Activated CD4-positive, alpha-beta memory T cell treated with anti-CD3 and anti-CD28 coated beads for 36 hours (primary cell): ENCODE measurements at regions of chr19 and their contacts with region 1.

Region 1: GRCh38 chr19:54203151-54203611 is 2.5 kb downstream of the RPS9 start:
- DNase-seq: no peak
- H3K4me3 Mint-ChIP-seq: peak overlapping the region; percentile 96
- H3K27ac Mint-ChIP-seq: peak overlapping the region; percentile 100
- H3K4me1 Mint-ChIP-seq: peaks cover 71% of the 10 kb centered on the region
- H3K27me3 Mint-ChIP-seq: no peaks in the 10 kb centered on the region

Region 2: DNA sequence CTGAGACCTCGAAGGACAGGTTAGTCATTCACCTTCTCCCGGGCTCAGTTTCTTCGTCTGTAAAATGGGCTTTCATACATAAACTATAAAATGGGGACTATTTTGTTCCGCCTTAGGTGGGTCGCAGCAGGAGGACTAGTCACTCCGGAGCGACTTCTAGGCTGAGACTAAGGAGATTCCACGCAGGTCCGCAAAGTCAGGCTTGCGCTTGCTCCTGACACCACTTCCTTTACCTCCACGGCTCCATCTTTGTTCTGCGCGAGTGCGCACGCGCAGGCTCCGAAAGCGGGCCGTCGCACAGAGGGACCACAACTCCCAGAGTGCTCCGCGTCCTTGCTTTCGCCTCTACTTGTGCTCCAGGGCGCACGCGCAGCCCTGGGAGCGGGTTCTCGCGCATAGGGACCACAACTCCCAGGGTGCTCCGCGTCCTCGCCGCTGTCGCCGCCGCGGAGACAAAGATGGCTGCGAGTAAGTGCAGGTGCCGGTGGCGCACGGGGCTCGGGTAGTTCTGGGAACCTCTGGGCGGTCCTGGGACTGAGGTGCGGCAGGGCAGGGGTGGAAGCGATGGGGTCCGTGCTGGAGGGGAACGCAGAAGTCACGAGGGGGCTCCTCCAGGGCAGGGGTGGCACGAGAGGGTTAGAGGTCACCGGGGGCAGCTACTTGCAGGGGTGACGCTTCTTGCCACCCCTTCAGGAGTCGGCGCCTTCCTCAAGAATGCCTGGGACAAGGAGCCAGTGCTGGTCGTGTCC is 100.6 kb before region 1 on chr19 and contains the start of gene NDUFA3:
- CTCF ChIA-PET with region 1: no interaction called
- POLR2A ChIA-PET with region 1: no interaction called
- intact Hi-C with region 1: loop called (anchors 1 kb)
- DNase-seq: peak; percentile 99
- H3K4me3 Mint-ChIP-seq: peak within 1 kb of the TSS; percentile 99
- H3K27ac Mint-ChIP-seq: peak within 1 kb of the TSS; percentile 89
- H3K4me1 Mint-ChIP-seq: peaks cover 13% of the 10 kb centered on the region
- H3K27me3 Mint-ChIP-seq: no peaks in the 10 kb centered on the region
- total RNA-seq, gene NDUFA3: 106 to 113 TPM

Region 3: GRCh38 chr19:54281007-54281728 is 78.0 kb after region 1 on chr19 and contains the start of gene LILRB2:
- CTCF ChIA-PET with region 1: no interaction called
- POLR2A ChIA-PET with region 1: no interaction called
- intact Hi-C with region 1: no loop called
- DNase-seq: no peak
- H3K4me3 Mint-ChIP-seq: no peak within 1 kb of the TSS
- H3K27ac Mint-ChIP-seq: no peak within 1 kb of the TSS
- H3K4me1 Mint-ChIP-seq: no peaks in the 10 kb centered on the region
- H3K27me3 Mint-ChIP-seq: peaks cover 47% of the 10 kb centered on the region
- total RNA-seq, gene LILRB2: not detected

Region 4: GRCh38 chr19:54803410-54803809 is 600.2 kb after region 1 on chr19 and contains the start of gene KIR2DL4:
- CTCF ChIA-PET with region 1: no interaction called
- POLR2A ChIA-PET with region 1: no interaction called
- intact Hi-C with region 1: no loop called
- DNase-seq: no peak
- H3K4me3 Mint-ChIP-seq: no peak within 1 kb of the TSS
- H3K27ac Mint-ChIP-seq: no peak within 1 kb of the TSS
- H3K4me1 Mint-ChIP-seq: no peaks in the 10 kb centered on the region
- H3K27me3 Mint-ChIP-seq: peaks cover 6% of the 10 kb centered on the region
- total RNA-seq, gene KIR2DL4: not detected